GM10248 (cell line): ENCODE measurements at regions of chr3 and their contacts with region 1.

Region 1: DNA sequence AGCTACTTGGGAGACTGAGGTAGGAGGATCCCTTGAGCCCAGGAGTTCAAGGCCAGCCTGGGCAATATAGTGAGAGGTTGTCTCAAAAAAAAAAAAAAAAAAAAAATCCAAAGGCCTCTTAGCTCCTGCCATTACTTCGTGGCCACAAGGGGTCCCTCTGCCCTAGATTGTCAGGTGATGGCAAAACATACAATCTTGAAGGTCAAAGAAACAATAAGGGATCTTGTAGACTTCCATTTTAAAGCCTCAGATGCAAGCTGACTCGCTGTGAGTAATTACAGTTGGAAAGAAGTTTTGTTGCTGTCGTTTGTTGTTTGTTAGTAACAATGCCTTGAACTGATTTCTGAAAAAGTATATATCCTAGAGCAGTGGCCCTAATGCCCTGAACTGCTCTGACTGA is 55.9 kb upstream of the PLCL2 start:
- DNase-seq: peak; percentile 38
- CTCF ChIP-seq: no peak

Region 2: DNA sequence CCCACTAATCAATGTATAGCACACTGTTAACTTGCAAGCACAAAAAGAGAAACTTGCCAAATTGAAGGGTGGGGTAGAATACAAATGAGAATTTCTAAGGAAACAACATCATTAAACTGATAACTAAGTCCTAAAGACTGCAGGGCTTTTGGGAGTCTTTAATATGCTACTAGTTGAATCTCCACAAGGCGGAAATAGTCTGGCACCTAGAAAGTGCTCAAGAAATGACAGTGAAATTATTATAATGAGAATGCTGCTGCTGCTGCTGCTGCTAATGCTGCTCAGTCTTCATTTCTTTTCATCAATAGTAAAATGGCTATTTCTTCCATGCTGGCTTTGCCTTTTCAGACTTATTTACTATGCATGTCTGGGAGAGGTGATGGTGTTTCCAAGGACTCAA is 1135.5 kb before region 1 on chr3:
- CTCF ChIA-PET with region 1: no interaction called
- POLR2A ChIA-PET with region 1: no interaction called
- DNase-seq: no peak
- CTCF ChIP-seq: no peak

Region 3: DNA sequence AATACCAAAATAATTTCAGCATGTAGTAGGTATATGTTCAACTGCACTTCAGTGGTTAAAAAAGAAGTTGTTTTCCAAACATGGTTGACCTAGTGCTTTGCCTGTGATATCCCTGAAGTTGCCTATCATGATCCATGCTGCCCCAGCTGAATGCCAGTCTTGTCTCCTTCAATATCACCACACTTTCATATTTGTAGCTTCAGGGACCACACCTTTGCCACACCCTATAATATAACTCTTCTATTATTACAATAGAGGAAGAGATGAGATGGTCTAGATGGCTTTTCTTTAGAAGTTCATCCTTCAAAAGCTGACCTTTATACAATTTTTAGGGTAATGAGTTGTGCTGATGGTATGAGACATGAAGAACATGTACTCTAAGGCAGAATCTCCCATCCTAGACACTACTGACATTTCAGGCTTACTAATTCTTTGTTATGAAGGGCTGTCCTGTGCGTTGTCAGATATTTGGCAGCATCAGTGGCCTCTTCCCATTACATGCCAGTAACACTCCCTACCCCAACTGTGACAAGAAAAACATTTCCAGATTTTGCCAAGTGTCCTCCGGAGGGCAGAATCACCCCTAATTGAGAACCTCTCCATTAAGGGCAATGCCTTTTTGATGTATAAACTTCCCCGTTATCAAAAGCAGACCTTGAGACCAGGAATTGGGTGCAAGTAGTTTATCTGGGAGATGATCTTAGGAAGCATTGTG is 20.3 kb before region 1 on chr3:
- CTCF ChIA-PET with region 1: interaction called, 17 read pairs
- POLR2A ChIA-PET with region 1: interaction called, 3 read pairs
- DNase-seq: no peak
- CTCF ChIP-seq: peak; percentile 34

Region 4: GRCh38 chr3:16842272-16843270 is 13.8 kb after region 1 on chr3:
- CTCF ChIA-PET with region 1: interaction called, 21 read pairs
- POLR2A ChIA-PET with region 1: no interaction called
- DNase-seq: peak; percentile 52
- CTCF ChIP-seq: no peak

Region 5: DNA sequence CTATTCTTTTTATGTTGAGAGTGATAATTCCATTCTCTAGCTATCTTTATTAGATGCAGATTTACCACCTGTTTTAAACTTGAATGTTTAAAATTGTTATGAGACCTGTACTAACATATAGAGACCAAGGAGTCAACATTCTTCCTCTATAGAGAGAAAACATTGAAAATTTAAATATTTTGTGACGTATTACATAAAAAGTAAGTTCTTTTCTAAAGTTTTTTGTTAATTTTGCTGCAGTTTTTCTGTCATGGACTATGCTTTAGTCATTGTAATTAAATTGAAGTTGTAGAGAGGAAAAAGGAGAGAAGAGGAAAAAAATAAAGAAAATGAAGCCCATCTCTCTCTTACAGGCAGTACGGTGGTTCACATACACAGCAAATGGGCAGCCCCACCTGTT is 191.3 kb after region 1 on chr3:
- CTCF ChIA-PET with region 1: no interaction called
- POLR2A ChIA-PET with region 1: no interaction called
- DNase-seq: no peak
- CTCF ChIP-seq: no peak